ENCODE measurements at regions of chr6 and their contacts with region 1.

Region 1: GRCh38 chr6:89819336-89820130 is at the start of gene MDN1:
- DNase-seq: peak; percentile 65
- H3K4me3 ChIP-seq: peak within 1 kb of the TSS; percentile 81
- H3K27me3 ChIP-seq: no peaks in the 10 kb centered on the region
- CTCF ChIP-seq: no peak
- polyA plus RNA-seq, gene MDN1: 3.3 and 6.0 TPM in 2 replicates

Region 2: DNA sequence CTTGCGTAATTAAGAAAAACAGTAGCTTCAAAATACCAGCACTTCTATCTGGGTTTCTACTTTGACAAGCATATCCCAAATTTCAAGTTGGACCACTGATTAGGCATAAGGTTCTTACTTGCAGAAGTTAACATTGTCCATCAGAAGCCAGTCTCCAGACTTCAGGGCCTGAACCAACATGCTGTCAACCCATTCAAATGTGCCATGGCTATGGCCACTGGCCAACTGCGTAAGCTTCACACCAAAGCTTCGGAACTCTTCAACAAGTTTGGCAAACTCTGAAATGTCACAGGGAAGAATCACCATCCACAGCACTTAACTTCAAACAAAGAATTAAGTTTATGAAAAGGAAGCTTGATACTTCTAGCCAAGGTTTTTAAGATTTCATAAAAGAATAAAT is 103.0 kb before region 1 on chr6:
- CTCF ChIA-PET with region 1: no interaction called
- POLR2A ChIA-PET with region 1: no interaction called
- DNase-seq: no peak
- H3K4me3 ChIP-seq: no peak overlapping the region
- H3K27me3 ChIP-seq: no peaks in the 10 kb centered on the region
- CTCF ChIP-seq: no peak

Region 3: DNA sequence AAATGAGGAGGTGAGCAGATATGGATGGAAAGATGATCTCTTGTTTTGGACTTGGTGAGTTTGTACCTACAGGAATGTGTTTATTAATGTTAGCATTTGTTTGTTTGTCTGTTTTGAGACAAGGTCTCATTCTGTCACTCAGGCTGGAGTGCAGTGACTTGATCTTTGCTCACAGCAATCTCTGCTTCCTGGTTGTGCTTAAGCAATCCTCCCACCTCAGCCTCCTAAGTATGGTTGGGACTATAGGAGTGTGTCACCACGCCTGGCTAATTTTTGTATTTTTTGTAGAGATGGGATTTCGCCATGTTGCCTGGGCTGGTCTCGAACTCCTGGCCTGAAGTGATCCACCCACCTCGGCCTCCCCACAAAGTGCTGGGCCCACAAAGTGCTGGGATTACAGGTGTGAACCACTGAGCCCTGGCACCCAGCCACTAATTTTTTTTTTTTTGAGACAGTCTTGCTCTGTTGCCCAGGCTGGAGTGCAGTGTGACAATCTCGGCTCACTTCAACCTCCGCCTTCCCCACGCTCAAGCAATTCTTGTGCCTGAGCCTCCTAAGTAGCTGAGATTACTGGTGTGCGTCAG is 17.2 kb after region 1 on chr6:
- CTCF ChIA-PET with region 1: no interaction called
- POLR2A ChIA-PET with region 1: interaction called, 11 read pairs
- DNase-seq: no peak
- H3K4me3 ChIP-seq: no peak overlapping the region
- H3K27me3 ChIP-seq: no peaks in the 10 kb centered on the region
- CTCF ChIP-seq: no peak

Region 4: GRCh38 chr6:89853068-89853467 is 33.5 kb after region 1 on chr6:
- CTCF ChIA-PET with region 1: no interaction called
- POLR2A ChIA-PET with region 1: no interaction called
- DNase-seq: no peak
- H3K4me3 ChIP-seq: no peak overlapping the region
- H3K27me3 ChIP-seq: no peaks in the 10 kb centered on the region
- CTCF ChIP-seq: no peak